ENCODE measurements at regions of chr7 and their contacts with region 1.

Region 1: GRCh38 chr7:70698219-70698832 is 433.6 kb upstream of the GALNT17 start:
- DNase-seq: peak; percentile 55 to 56
- ATAC-seq: peak in 1 of 2 experiments; percentile 53; a peak in 3 of 6 replicates
- H3K4me3 ChIP-seq: no peak overlapping the region
- H3K27ac ChIP-seq: no peak overlapping the region
- H3K4me1 ChIP-seq: no peaks in the 10 kb centered on the region
- CTCF ChIP-seq: peak; percentile 93
- EP300 ChIP-seq: no peak
- POLR2A ChIP-seq: no peak
- RAD21 ChIP-seq: peak; percentile 93 to 95

Region 2: DNA sequence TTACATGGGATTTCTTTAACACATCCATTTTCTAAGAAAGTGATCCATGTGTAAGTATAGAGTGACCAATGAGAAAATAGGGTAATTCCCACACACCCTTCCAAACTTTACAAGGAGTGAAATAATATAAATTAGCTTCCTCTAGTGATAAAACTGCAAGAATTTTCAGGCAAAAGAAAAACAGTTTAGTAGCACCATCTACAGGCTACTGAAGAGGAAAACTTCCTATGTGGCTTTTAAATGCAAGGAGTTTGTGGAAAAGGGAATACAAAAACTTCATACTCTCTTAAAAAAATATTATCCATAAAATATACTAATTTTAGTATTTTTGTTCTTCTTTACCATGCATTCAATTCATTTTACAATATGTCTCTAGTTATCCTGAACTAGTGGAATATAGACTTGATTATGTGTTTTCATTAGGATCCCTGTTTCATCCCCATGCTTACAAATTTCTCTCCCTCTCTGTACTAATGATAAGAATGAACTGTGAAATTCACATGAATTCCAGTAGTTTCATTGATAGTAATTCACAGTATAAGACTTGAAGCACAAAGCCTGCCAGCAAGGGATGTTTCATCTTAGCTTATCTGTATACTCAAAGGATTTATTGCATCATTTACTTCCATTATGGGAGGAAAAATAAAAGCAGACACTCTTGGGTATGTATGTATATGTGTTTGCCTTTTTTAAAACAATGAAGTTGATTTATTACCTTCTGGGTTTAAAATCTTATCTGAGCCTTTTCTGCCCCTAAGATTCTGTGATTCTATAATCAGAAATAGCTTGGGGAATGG is 657.2 kb before region 1 on chr7:
- CTCF ChIA-PET with region 1: interaction called, 32 read pairs
- POLR2A ChIA-PET with region 1: no interaction called
- DNase-seq: peak; percentile 5 to 15
- ATAC-seq: no peak
- H3K4me3 ChIP-seq: no peak overlapping the region
- H3K27ac ChIP-seq: no peak overlapping the region
- H3K4me1 ChIP-seq: no peaks in the 10 kb centered on the region
- CTCF ChIP-seq: peak; percentile 53
- EP300 ChIP-seq: no peak
- POLR2A ChIP-seq: no peak
- RAD21 ChIP-seq: peak; percentile 59 to 73

Region 3: GRCh38 chr7:70571403-70571934 is 126.9 kb before region 1 on chr7:
- CTCF ChIA-PET with region 1: no interaction called
- POLR2A ChIA-PET with region 1: no interaction called
- DNase-seq: peak; percentile 36 to 55
- ATAC-seq: peak; percentile 87
- H3K4me3 ChIP-seq: no peak overlapping the region
- H3K27ac ChIP-seq: peak overlapping the region; percentile 70 to 82
- H3K4me1 ChIP-seq: peaks cover 27% of the 10 kb centered on the region
- CTCF ChIP-seq: no peak
- EP300 ChIP-seq: no peak
- POLR2A ChIP-seq: no peak
- RAD21 ChIP-seq: no peak

Region 4: DNA sequence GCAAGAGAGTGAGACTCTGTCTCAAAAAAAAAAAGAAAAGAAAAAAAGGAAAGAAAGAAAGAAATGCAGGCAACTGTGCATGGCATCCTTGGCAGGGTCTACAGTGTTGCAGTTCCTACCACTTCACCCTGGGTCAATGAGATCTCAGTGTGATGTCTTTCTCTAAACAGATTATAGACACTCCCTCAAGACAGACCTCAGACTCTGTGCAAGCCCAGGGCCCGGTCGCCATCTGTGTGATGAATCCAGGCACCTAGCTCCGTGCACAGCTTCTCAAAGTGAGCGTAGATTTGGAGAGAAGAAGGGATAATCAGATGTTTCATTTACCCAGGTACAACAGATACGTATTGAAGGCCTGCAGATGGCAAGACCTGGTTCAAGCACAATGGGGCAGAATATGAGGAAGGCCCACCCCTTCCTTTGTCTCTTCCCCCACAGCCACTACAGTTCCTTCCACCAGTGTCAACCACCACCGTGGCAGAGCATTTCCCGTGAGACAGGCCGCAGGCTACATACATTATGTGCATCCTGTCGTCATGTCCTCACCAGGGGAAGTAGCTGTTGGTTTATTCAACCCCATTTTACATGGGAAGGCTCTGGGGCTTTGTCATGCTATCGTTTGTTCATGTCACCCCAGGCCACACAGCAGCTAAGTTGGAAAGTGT is 38.0 kb before region 1 on chr7:
- CTCF ChIA-PET with region 1: no interaction called
- POLR2A ChIA-PET with region 1: no interaction called
- DNase-seq: no peak
- ATAC-seq: no peak
- H3K4me3 ChIP-seq: no peak overlapping the region
- H3K27ac ChIP-seq: no peak overlapping the region
- H3K4me1 ChIP-seq: no peaks in the 10 kb centered on the region
- CTCF ChIP-seq: no peak
- EP300 ChIP-seq: no peak
- POLR2A ChIP-seq: no peak
- RAD21 ChIP-seq: no peak

Region 5: DNA sequence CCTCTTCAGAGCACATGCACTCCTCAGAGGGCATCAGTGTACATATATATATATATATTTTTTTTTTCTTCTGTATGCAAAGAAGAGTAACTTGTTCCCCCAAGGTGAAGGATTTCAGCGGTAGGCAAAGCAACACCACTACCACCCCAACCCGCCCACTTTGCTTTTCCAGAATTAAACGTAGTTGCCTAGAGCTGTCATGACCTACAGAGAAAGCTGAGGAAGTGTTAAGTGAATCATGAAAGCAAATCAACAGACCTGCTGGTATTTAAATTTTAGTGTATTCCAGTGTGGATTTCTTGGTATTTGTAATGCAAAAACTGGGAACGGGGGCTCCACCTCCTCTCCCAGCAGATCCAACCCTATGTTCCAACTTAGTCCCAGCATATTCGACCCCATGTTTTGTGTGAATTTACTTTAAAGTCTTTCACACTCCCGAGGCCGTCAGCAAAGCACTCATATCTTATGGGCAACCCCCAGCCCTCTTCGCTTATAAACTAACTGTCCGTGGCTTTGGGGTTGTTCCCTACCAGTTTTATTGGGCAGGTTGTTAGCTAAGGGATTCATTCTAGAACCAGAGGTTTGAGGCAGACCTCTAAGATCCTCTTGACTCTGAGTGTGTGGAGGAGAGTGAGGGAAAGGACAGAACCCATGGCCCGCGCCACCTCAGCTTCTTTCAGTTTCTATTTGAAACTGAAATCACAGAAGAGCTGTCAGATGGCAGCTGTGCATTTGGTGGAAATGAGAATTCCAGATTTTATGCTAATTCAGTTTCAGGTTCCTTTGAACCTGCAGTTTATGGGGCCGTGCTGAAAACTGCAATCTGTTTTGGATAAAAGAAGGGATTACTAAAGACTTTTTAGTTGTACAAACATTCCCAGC is 16.6 kb before region 1 on chr7:
- CTCF ChIA-PET with region 1: interaction called, 13 read pairs
- POLR2A ChIA-PET with region 1: no interaction called
- DNase-seq: no peak
- ATAC-seq: no peak
- H3K4me3 ChIP-seq: no peak overlapping the region
- H3K27ac ChIP-seq: no peak overlapping the region
- H3K4me1 ChIP-seq: no peaks in the 10 kb centered on the region
- CTCF ChIP-seq: no peak
- EP300 ChIP-seq: no peak
- POLR2A ChIP-seq: no peak
- RAD21 ChIP-seq: no peak

Region 6: GRCh38 chr7:70710011-70710480 is 11.7 kb after region 1 on chr7:
- CTCF ChIA-PET with region 1: interaction called, 39 read pairs
- POLR2A ChIA-PET with region 1: no interaction called
- DNase-seq: peak in 1 of 2 experiments; percentile 24
- ATAC-seq: peak in 1 of 2 experiments; percentile 55; a peak in 2 of 6 replicates
- H3K4me3 ChIP-seq: no peak overlapping the region
- H3K27ac ChIP-seq: no peak overlapping the region
- H3K4me1 ChIP-seq: peaks cover 12% of the 10 kb centered on the region
- CTCF ChIP-seq: no peak
- EP300 ChIP-seq: no peak
- POLR2A ChIP-seq: no peak
- RAD21 ChIP-seq: no peak